Posterior vena cava (tissue), 2 donors: ENCODE measurements at regions of chr1 and their contacts with region 1.

Region 1: GRCh38 chr1:229862017-229862774 is 204.8 kb upstream of the GALNT2 start:
- DNase-seq: no peak

Region 2: DNA sequence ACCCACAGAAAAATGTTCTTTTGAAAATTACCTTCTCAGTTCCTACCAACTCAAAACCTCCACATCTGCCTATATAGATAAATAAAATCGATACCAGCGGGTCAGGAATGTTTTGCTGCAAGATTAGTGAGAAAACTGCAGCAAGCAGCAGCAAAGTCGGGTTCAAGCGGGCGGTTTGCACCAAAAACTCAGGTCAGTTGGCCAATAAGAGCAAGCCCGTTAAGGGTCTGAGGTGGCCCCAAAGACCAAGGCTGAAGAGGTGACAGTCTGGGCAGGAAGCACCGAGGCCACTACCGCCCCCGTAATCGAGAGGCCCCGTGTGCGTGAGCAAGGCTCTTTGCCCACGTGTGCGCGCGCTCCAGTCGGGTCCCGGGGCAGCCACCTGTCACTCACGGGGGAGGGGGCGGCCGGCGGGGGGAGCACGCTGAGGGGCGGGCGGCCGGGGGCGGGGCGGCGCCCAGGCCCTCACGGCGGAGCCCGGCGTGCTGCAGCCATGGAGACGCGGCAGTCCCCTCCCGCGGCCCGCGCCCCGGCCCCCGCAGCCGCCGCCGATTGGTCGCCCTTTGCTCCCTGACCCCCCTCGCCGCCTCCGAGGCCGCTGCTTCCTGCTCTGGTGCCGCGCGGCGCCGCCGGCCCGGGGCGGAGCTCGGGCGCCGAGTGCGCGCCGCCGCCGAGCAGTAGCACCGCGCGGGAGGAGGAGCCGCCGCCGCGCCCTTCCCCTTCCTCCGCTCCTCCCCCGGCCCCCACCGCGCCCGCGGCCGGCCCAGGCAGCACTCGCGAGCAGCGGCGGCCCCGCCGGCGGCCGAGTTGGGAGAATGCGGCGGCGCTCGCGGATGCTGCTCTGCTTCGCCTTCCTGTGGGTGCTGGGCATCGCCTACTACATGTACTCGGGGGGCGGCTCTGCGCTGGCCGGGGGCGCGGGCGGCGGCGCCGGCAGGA is 204.5 kb after region 1 on chr1 and contains the start of gene GALNT2:
- intact Hi-C with region 1: loop called in 1 of 2 experiments (anchors 10 kb)
- DNase-seq: peak; percentile 97
- total RNA-seq, gene GALNT2: 72.6 to 79.6 TPM